HAP-1 (cell line): ENCODE measurements at regions of chr1 and their contacts with region 1.

Region 1: DNA sequence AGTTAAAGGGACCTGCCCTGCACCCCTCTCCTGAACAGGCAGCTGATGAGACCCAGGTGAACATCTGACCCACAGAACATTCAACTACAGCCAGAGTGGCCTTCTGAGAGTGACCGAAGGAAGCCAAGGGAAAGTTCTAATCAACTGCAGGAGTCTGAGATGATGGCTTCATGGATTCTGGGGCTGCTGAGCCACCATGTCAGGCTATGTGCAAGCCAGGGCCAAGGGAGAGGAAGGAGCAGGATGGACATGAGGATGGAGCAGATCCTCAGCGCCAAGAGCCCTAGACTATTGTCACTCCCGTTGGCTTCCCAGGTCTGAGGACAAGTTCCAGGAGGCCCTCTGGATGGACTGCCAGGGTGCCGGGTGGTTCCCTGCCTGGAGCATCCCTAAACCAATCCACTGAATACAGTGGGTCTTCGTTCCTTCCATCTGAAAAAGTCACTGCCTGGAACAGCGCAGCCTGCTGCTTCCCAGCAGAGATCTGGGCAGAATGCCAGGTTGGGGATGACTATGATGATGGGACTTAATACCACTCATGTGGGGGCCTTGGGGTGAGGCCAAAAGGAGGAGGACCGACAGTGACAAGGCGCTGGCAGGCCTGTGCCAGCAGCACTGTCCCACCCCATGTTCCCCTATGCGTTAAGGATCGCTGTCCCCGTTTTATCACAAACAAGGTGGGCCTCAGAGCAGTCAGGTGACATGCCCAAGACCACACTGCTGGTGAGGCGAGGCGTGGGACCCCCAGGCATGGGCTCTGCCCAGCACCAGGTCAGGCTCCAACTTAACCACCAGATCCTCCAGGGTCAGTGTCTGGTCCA is 19.8 kb downstream of the SPOCD1 start:
- DNase-seq: peak in 1 of 2 experiments; percentile 45
- H3K4me3 ChIP-seq: no peak overlapping the region
- H3K4me1 ChIP-seq: no peaks in the 10 kb centered on the region
- H3K27me3 ChIP-seq: peaks cover 4% of the 10 kb centered on the region; the same call in 1 of the 2 replicates

Region 2: GRCh38 chr1:31658721-31659120 is 137.3 kb before region 1 on chr1:
- in situ Hi-C with region 1: loop called (anchors 5 kb)
- DNase-seq: no peak
- H3K4me3 ChIP-seq: no peak overlapping the region
- H3K4me1 ChIP-seq: no peaks in the 10 kb centered on the region
- H3K27me3 ChIP-seq: no peaks in the 10 kb centered on the region